Ascending aorta (tissue), 2 donors: ENCODE measurements at regions of chr9 and their contacts with region 1.

Region 1: GRCh38 chr9:125407974-125408900 is 146.6 kb downstream of the GAPVD1 start:
- DNase-seq: peak in 1 of 2 donors; percentile 72
- H3K4me3 ChIP-seq: peak overlapping the region; percentile 68 to 73
- H3K27ac ChIP-seq: no peak overlapping the region
- H3K4me1 ChIP-seq: peaks cover 2 to 4% of the 10 kb centered on the region in 2 donors
- H3K27me3 ChIP-seq: peaks cover 5% of the 10 kb centered on the region
- CTCF ChIP-seq: peak; percentile 43 to 77 (median 76)

Region 2: DNA sequence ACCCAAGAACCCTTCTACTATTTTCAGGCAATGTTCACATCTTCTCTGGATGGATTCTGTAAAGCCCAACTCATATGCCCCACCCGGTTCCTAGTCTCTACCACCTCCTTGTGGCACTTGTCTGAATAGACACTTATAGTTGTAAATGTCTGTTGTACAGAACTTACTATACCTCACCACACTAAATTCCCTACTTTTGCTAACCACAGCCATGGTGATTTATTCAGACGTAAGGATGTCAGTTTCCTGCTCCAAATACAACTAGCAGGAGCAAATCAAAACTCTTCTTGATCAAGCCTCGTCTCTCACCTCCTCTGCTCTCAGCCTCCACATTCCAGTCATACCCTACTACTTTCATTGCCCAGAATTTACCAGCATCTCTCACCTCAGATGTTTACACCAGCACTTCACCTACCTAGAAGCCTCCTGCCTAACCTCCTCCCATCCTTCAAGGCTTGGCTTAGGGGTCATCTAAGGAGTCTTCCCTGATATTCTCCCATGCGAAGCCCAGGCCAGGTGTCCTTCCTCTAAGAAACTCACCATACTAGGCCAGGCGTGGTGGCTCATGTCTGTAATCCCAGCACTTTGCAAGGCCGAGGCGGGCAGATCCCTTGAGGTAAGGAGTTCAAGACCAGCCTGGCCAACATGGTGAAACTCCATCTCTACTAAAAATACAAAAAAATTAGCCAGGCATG is 223.3 kb after region 1 on chr9:
- intact Hi-C with region 1: loop called (anchors 2 kb)
- DNase-seq: no peak
- H3K4me3 ChIP-seq: no peak overlapping the region
- H3K27ac ChIP-seq: no peak overlapping the region
- H3K4me1 ChIP-seq: peaks cover 0 to 9% of the 10 kb centered on the region in 2 donors
- H3K27me3 ChIP-seq: no peaks in the 10 kb centered on the region
- CTCF ChIP-seq: peak; percentile 19 to 50 (median 31)

Region 3: DNA sequence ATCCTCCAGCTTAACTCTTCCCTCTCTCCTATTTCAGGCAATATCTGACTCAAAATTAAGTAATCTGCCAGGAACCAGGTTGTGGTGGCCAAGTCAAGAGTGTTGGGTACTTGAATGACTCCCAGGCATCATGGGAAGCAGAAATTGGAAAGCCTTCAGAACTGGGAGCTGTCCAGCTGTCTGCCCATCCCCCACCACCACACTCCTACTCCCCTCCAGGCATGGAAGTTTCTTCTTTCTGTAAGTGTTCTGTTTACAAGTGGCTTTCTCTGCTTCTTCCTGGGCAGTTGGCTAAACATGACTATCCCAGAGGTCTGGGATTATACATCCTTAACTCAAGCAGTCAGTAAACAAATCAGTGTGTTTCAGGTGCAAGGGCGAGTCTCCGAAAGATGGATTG is 324.3 kb after region 1 on chr9:
- intact Hi-C with region 1: no loop called
- DNase-seq: no peak
- H3K4me3 ChIP-seq: no peak overlapping the region
- H3K27ac ChIP-seq: no peak overlapping the region
- H3K4me1 ChIP-seq: no peaks in the 10 kb centered on the region
- H3K27me3 ChIP-seq: no peaks in the 10 kb centered on the region
- CTCF ChIP-seq: no peak

Region 4: GRCh38 chr9:126228781-126229444 is 820.7 kb after region 1 on chr9:
- intact Hi-C with region 1: loop called (anchors 2 kb)
- DNase-seq: peak in 1 of 2 donors; percentile 75
- H3K4me3 ChIP-seq: no peak overlapping the region
- H3K27ac ChIP-seq: no peak overlapping the region
- H3K4me1 ChIP-seq: no peaks in the 10 kb centered on the region
- H3K27me3 ChIP-seq: no peaks in the 10 kb centered on the region
- CTCF ChIP-seq: peak; percentile 61 to 81 (median 72)

Region 5: GRCh38 chr9:126398403-126399058 is 990.3 kb after region 1 on chr9:
- intact Hi-C with region 1: loop called (anchors 2 kb)
- DNase-seq: peak in 1 of 2 donors; percentile 82
- H3K4me3 ChIP-seq: no peak overlapping the region
- H3K27ac ChIP-seq: no peak overlapping the region
- H3K4me1 ChIP-seq: no peaks in the 10 kb centered on the region
- H3K27me3 ChIP-seq: no peaks in the 10 kb centered on the region
- CTCF ChIP-seq: peak; percentile 88 to 98 (median 92)

Region 6: GRCh38 chr9:126490871-126491567 is 1082.8 kb after region 1 on chr9:
- intact Hi-C with region 1: loop called (anchors 10 kb)
- DNase-seq: no peak
- H3K4me3 ChIP-seq: no peak overlapping the region
- H3K27ac ChIP-seq: no peak overlapping the region
- H3K4me1 ChIP-seq: no peaks in the 10 kb centered on the region
- H3K27me3 ChIP-seq: no peaks in the 10 kb centered on the region
- CTCF ChIP-seq: peak; percentile 81 to 92 (median 82)